ENCODE measurements at regions of chr9 and their contacts with region 1.

Region 1: GRCh38 chr9:5186416-5187169 is 1.2 kb upstream of the INSL6 start:
- DNase-seq: peak in 7 of 10 donors; percentile 7 to 87 (median 42)

Region 2: DNA sequence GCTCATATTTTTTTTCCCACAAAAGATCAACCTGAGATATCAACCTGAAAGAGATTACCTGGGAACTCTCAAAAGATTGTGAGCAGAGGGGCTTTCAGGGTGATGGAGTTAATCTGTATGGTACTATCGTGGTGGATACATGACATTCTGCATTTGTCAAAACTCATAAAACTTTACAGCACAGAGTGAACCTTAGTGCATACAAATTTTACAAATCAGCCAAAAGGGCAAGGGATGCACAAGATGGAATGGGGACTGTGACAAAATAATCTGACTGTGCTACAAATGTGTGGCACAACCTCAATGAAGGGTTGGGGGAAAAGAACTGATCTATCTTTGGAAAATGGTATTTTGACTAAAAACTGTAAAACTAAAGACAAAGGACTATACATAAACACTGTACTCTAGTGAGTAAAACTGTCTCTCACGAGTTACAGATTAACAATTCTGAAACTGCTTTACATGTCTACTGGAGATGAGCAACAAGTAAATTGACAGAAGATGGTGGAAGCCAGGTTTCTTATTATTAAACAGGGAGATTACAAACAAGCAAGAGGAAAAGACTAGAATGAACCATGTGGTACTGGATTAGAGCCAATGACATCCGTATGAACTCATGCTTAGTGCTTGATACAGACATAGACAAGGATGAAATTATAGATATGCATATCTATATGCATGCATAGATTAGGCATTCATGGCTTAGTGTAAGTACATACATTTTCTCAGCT is 177.9 kb after region 1 on chr9:
- intact Hi-C with region 1: no loop called
- DNase-seq: no peak

Region 3: DNA sequence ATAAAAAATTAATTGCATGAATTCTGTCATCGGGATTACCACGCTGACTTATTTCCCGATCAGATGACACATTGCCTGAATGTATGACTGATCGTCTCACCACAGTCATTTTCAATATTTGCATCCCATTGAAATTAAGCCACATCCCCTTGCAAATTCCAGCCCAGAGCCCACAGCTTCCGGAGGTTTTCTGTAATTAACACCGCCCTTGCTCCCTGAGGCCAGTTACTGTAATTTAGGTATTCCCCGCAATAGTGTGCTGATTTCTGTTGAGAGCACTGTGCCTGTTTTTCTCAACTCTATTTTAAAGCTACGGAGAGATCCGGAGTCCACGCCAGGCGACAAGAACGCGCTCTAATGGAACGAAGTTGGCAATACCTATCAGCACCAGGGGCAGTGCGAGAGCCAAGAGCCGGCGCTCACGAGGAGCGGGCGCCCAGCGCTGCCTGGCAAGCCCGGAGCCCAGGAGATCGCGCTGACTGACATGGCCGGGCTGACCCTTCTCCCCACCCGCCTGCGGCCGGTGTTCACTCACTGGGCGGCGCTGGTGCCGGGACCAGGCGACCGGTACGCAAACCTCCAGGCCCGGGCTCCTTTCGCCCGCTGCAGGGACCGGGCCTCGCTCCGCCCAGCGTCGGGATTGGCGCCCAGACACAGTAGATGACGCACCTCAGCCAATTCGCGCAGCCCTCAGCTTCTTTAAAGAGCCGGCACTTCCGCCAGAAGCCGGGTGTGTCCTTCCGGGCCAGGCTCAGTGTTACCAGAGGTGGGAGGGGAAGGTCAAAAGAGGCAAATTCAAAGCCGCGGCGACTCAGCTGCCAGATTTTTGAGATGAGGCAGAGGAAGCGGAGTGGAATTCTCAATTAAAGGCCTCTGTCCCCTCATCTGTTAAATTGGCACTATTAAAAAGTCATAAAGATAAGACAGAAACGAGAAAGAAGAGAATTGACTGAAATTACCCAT is 250.9 kb after region 1 on chr9 and contains the start of gene PLGRKT:
- intact Hi-C with region 1: loop called (anchors 5 kb)
- DNase-seq: peak; percentile 92 to 99 (median 96)

Region 4: GRCh38 chr9:5593904-5594303 is 407.3 kb after region 1 on chr9:
- intact Hi-C with region 1: loop called (anchors 5 kb)
- DNase-seq: no peak

Measured in posterior cingulate gyrus (tissue), 11 donors.